Activated CD8-positive, alpha-beta T cell treated with anti-CD3 and anti-CD28 coated beads, Interleukin-2, amount 10 ng/mL, durations not matched to agents 7 days and 5 days (primary cell): ENCODE measurements at regions of chr1 and their contacts with region 1.

Region 1: DNA sequence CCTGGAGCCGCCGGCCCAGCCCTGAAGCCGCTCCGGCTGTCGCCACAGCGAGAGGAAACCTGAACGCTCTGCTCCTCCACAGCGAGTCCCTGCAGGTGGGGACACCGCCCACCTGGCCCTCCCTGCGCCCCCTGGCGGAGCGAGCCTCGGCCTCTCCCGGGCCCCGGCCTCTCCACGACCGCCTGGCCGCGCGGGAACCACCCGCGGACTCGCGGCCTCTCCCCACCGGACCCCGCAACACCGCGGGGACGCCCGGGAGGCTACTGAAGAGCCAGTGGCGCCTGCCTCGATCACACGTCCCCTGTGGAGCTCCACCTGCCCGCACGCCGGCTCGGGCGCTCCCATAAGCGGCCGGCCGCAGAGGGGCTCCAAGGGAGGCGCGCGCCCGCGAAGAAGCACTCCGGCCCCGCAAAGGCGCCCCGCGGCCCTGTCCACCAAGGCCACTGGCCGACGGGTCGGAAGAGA is 109.6 kb downstream of the KCNN3 start:
- DNase-seq: peak; percentile 87
- ATAC-seq: peak; percentile 93
- H3K4me3 Mint-ChIP-seq: peak overlapping the region; percentile 53
- H3K27ac Mint-ChIP-seq: no peak overlapping the region
- H3K4me1 Mint-ChIP-seq: peaks cover 45% of the 10 kb centered on the region
- H3K27me3 Mint-ChIP-seq: peaks cover 21% of the 10 kb centered on the region

Region 2: GRCh38 chr1:154714638-154715037 is 45.9 kb before region 1 on chr1:
- CTCF ChIA-PET with region 1: interaction called, 10 read pairs
- POLR2A ChIA-PET with region 1: no interaction called
- DNase-seq: peak; percentile 37
- ATAC-seq: peak; percentile 75
- H3K4me3 Mint-ChIP-seq: no peak overlapping the region
- H3K27ac Mint-ChIP-seq: no peak overlapping the region
- H3K4me1 Mint-ChIP-seq: peaks cover 18% of the 10 kb centered on the region
- H3K27me3 Mint-ChIP-seq: peaks cover 4% of the 10 kb centered on the region

Region 3: DNA sequence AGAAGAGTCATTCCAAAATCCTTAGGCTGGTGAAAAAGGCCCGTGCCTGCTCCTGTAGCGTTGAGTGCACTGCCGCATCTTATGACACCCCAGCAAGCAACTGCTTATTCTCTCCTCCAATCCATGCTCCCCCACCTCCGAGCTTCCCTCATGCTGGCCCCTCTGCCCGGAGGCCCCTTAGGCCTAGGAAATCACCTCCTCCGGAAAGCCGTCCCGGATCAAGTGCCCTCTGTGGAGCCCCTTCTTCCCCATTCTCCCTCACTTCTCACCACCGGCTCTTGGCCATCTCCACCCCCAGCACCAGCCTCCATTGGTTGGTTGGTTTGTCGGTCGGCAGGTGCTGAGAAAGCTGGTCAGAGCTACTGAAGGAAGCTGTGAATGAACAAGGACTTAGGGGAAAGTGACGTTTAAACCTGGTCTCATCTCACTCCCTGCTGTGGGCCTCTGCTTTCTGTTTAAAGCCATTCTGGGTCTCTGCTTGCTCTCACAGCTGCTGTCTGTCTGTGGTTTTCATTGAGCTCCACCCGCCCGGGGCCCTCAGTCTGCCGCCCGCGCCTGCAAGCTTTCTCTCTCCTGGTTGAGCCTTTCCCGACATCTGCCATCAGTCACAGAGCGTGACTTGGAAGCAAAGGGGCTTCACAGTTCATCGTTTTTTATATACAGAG is 12.6 kb before region 1 on chr1:
- CTCF ChIA-PET with region 1: interaction called, 72 read pairs
- POLR2A ChIA-PET with region 1: interaction called, 4 read pairs
- DNase-seq: peak; percentile 74
- ATAC-seq: peak; percentile 79
- H3K4me3 Mint-ChIP-seq: peak overlapping the region; percentile 69
- H3K27ac Mint-ChIP-seq: peak overlapping the region; percentile 90
- H3K4me1 Mint-ChIP-seq: peaks cover 74% of the 10 kb centered on the region
- H3K27me3 Mint-ChIP-seq: peaks cover 18% of the 10 kb centered on the region